MCF 10A (cell line): ENCODE measurements at regions of chr4 and their contacts with region 1.

Region 1: DNA sequence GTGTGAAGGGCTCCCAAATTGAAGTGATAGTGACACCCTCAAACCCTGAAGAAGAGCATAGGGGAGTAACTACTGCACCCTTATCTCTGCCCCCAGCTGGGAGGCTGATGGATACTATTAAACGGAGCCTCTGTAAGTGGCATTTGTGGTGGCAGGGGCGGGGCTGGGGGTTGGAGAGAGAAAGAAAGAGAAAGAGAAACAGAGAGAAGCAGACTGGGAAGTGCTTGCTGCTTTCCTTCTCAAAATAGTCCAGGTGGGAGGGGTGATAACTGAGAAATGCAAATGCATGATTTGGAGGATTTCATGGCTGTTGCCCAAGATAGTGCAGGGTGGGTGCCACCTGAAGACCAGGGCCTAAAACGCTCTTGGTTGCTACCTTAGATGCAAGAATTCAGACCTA is 253.5 kb upstream of the GATB start:
- DNase-seq: no peak
- H3K4me3 Mint-ChIP-seq: no peak overlapping the region
- H3K27ac Mint-ChIP-seq: no peak overlapping the region
- H3K4me1 Mint-ChIP-seq: no peaks in the 10 kb centered on the region
- H3K27me3 Mint-ChIP-seq: peaks cover 24% of the 10 kb centered on the region
- CTCF ChIP-seq: no peak

Region 2: GRCh38 chr4:152079543-152080293 is 65.4 kb after region 1 on chr4:
- CTCF ChIA-PET with region 1: no interaction called
- POLR2A ChIA-PET with region 1: no interaction called
- intact Hi-C with region 1: loop called (anchors 10 kb)
- DNase-seq: no peak
- H3K4me3 Mint-ChIP-seq: no peak overlapping the region
- H3K27ac Mint-ChIP-seq: no peak overlapping the region
- H3K4me1 Mint-ChIP-seq: no peaks in the 10 kb centered on the region
- H3K27me3 Mint-ChIP-seq: no peaks in the 10 kb centered on the region
- CTCF ChIP-seq: no peak

Region 3: GRCh38 chr4:152197211-152197610 is 182.9 kb after region 1 on chr4:
- CTCF ChIA-PET with region 1: no interaction called
- POLR2A ChIA-PET with region 1: no interaction called
- intact Hi-C with region 1: no loop called
- DNase-seq: no peak
- H3K4me3 Mint-ChIP-seq: no peak overlapping the region
- H3K27ac Mint-ChIP-seq: no peak overlapping the region
- H3K4me1 Mint-ChIP-seq: no peaks in the 10 kb centered on the region
- H3K27me3 Mint-ChIP-seq: no peaks in the 10 kb centered on the region
- CTCF ChIP-seq: no peak